Activated T-helper 2 cell treated with anti-CD3 and anti-CD28 coated beads, Interferon-gamma antibody, Interleukin-2, Interleukin-4, amounts not matched to agents 10 μg/mL and 5 μg/mL and 100 μg/mL, durations not matched to agents 14 hours and 24 hours and 36 hours (primary cell): ENCODE measurements at regions of chr10 and their contacts with region 1.

Region 1: GRCh38 chr10:24209946-24210491 is 1.1 kb downstream of the KIAA1217 start:
- DNase-seq: no peak
- H3K4me3 Mint-ChIP-seq: peak overlapping the region; percentile 55
- H3K27ac Mint-ChIP-seq: peak overlapping the region; percentile 69
- H3K4me1 Mint-ChIP-seq: peaks cover 24% of the 10 kb centered on the region
- H3K27me3 Mint-ChIP-seq: peaks cover 42% of the 10 kb centered on the region

Region 2: GRCh38 chr10:24097751-24098207 is 112.2 kb before region 1 on chr10:
- intact Hi-C with region 1: no loop called
- DNase-seq: no peak
- H3K4me3 Mint-ChIP-seq: no peak overlapping the region
- H3K27ac Mint-ChIP-seq: no peak overlapping the region
- H3K4me1 Mint-ChIP-seq: no peaks in the 10 kb centered on the region
- H3K27me3 Mint-ChIP-seq: no peaks in the 10 kb centered on the region

Region 3: GRCh38 chr10:24128066-24128730 is 81.8 kb before region 1 on chr10:
- intact Hi-C with region 1: no loop called
- DNase-seq: no peak
- H3K4me3 Mint-ChIP-seq: no peak overlapping the region
- H3K27ac Mint-ChIP-seq: no peak overlapping the region
- H3K4me1 Mint-ChIP-seq: no peaks in the 10 kb centered on the region
- H3K27me3 Mint-ChIP-seq: no peaks in the 10 kb centered on the region

Region 4: GRCh38 chr10:24383681-24384106 is 173.7 kb after region 1 on chr10:
- intact Hi-C with region 1: loop called (anchors 1 kb)
- DNase-seq: peak; percentile 9
- H3K4me3 Mint-ChIP-seq: no peak overlapping the region
- H3K27ac Mint-ChIP-seq: peak overlapping the region; percentile 67
- H3K4me1 Mint-ChIP-seq: peaks cover 15% of the 10 kb centered on the region
- H3K27me3 Mint-ChIP-seq: no peaks in the 10 kb centered on the region